WTC11 (cell line): ENCODE measurements at regions of chr10 and their contacts with region 1.

Region 1: DNA sequence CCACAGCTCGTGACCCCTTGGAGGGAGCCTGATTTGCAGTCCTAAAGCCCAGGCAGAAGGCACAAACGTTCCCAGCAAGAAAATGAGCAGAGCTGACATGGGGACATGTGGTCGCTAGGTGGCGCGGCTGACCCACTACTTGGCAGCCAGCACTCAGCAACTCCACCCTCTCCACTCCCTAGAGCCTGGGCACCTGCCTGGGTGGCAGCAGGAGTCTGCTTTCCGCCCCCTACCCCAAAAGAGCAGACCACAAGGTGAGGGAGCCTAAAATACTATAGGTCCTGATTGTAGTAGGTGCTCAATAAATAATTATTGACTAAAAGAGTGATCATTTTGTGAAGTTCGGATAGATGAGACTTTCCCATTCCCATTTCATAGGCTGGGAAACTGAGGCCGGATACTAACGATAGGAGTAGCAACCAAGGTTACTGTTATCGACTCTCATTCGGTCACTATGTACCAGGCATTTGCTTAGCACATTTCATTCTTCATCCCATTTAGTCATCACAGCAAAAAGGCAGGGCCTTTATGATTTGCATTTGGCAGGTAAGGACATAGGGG is 57.4 kb downstream of the NEUROG3 start:
- DNase-seq: peak; percentile 88
- ATAC-seq: peak; percentile 89
- H3K4me3 Mint-ChIP-seq: no peak overlapping the region
- H3K27ac Mint-ChIP-seq: no peak overlapping the region
- H3K4me1 Mint-ChIP-seq: peaks cover 19% of the 10 kb centered on the region
- H3K27me3 Mint-ChIP-seq: no peaks in the 10 kb centered on the region
- CTCF ChIP-seq: peak; percentile 94

Region 2: GRCh38 chr10:69408318-69409175 is 107.2 kb before region 1 on chr10:
- CTCF ChIA-PET with region 1: interaction called, 27 read pairs
- POLR2A ChIA-PET with region 1: no interaction called
- DNase-seq: peak; percentile 94
- ATAC-seq: peak; percentile 71
- H3K4me3 Mint-ChIP-seq: peak overlapping the region; percentile 49
- H3K27ac Mint-ChIP-seq: peak overlapping the region; percentile 72; the same call in 1 of the 2 replicates
- H3K4me1 Mint-ChIP-seq: peaks cover 42% of the 10 kb centered on the region
- H3K27me3 Mint-ChIP-seq: peaks cover 7% of the 10 kb centered on the region
- CTCF ChIP-seq: peak; percentile 62

Region 3: DNA sequence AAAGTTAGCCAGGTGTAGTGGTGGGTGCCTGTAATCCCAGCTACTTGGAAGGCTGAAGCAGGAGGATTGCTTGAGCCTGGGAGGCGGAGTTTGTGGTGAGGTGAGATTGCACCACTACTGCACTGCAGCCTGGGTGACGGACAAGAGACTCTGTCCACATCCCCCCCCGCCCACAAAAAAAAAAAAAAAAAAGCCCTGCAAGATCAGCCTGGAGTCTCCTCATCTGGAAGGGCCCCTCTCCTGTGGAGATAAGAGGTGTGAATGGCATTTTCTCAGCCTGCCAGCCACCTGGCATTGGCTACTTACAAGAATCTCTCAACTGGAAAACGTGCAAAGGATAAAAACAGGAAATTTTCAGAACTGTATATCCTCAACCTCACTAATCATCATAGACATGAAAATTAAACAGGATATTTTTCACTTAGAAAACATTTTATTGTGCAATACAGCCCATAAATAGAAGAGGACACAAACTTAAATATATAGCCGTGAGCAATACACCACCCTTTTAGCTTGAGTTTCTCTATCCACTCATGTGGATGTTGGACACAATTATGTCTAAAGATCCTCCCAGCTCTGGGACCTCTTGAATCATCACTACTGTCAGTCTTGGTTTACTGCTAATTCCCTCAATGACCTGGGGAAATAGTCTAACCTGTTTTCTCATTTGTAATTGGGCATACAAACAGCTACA is 75.8 kb before region 1 on chr10:
- CTCF ChIA-PET with region 1: no interaction called
- POLR2A ChIA-PET with region 1: no interaction called
- DNase-seq: no peak
- ATAC-seq: peak; percentile 68
- H3K4me3 Mint-ChIP-seq: no peak overlapping the region
- H3K27ac Mint-ChIP-seq: no peak overlapping the region
- H3K4me1 Mint-ChIP-seq: peaks cover 6% of the 10 kb centered on the region; the same call in 1 of the 2 replicates
- H3K27me3 Mint-ChIP-seq: peaks cover 9% of the 10 kb centered on the region
- CTCF ChIP-seq: no peak

Region 4: GRCh38 chr10:69527961-69528360 is 12.2 kb after region 1 on chr10:
- CTCF ChIA-PET with region 1: interaction called, 20 read pairs
- POLR2A ChIA-PET with region 1: no interaction called
- DNase-seq: no peak
- ATAC-seq: no peak
- H3K4me3 Mint-ChIP-seq: no peak overlapping the region
- H3K27ac Mint-ChIP-seq: no peak overlapping the region
- H3K4me1 Mint-ChIP-seq: peaks cover 1% of the 10 kb centered on the region; the same call in 1 of the 2 replicates
- H3K27me3 Mint-ChIP-seq: peaks cover 8% of the 10 kb centered on the region
- CTCF ChIP-seq: no peak

Region 5: DNA sequence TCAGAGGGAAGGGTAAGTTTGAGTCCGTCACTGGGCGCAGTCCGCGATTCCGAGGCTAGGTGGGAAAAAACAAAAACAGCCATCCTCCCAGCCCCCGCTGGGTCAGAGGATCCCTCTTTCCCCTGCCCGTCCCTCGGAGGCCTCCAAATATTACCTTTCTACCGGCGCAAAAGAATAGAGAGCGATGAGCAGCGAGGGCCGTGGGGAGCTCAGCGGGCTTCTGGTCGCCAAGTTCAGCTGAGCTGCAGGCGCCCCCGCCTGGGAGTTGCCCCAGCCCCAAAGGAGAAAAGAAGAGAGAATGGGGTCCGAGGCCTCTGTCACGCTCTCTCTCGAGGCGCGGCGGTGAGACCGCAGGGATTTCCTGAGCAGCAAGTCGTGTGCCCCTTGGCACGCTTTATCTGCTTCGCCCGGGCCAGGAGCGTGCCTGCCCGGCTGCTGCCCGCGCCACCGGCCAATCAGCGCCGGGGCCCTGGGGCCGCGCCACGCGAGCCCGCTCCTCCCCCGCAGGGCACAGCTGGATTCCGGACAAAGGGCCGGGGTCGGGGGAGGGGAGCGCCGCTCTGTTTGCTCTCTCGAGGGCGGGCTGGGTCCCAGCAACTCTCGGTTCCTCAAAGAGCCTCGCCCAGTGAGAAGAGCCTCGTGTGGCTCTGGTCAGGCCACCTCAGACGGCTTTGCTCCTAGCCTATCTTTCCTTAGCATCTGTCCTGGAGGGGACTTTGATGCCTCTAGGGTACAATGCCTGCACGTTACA is 57.5 kb after region 1 on chr10 and contains the start of gene NEUROG3:
- CTCF ChIA-PET with region 1: interaction called, 53 read pairs
- POLR2A ChIA-PET with region 1: interaction called, 3 read pairs
- DNase-seq: peak; percentile 56
- ATAC-seq: peak; percentile 2; the same call in 1 of the 2 replicates
- H3K4me3 Mint-ChIP-seq: peak within 1 kb of the TSS; percentile 88
- H3K27ac Mint-ChIP-seq: peak within 1 kb of the TSS; percentile 74; the same call in 1 of the 2 replicates
- H3K4me1 Mint-ChIP-seq: peaks cover 73% of the 10 kb centered on the region
- H3K27me3 Mint-ChIP-seq: peaks cover 100% of the 10 kb centered on the region
- CTCF ChIP-seq: no peak
- total RNA-seq, gene NEUROG3: 1.9 to 2.4 TPM (median 2.0 TPM) in 3 replicates

Region 6: DNA sequence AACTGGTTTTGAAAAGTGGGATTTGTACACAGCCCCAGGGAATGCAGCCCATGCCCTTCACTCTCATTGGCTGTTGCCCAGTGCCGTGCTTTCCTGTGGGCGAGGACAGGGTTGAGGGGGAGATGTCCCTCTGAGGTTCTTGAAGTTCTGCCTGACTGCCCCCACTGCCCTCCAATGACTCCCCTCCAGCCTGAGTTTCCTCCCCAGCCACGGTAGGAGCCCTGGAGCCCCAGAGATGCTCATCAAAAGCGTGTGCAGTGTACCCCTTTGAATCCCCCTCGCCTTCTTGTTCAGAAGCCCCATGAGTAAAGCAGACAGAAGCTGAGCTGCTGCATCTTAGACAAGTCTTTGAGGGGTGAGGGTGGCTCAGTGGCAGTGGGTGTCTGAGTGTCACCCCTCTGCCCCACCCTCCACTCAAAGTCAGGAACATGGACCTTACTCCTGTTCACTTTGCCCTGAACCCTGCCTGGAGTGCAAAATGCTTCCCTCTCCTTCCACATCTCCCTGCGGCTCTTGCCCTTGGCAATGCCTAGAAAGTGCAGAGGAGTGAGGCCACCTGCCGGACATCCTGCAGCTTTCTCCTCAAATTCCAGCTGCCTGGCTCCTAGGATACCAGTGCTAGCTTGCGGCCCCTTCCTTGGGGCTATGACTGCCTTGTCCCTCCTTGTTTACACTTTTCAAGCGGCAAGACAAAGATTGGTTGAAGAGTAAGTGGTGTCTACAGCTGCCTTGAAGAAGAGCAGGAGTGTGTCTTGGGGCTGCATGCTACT is 134.2 kb after region 1 on chr10:
- CTCF ChIA-PET with region 1: interaction called, 511 read pairs
- POLR2A ChIA-PET with region 1: interaction called, 3 read pairs
- DNase-seq: peak; percentile 43
- ATAC-seq: peak; percentile 66
- H3K4me3 Mint-ChIP-seq: no peak overlapping the region
- H3K27ac Mint-ChIP-seq: no peak overlapping the region
- H3K4me1 Mint-ChIP-seq: peaks cover 50% of the 10 kb centered on the region
- H3K27me3 Mint-ChIP-seq: no peaks in the 10 kb centered on the region
- CTCF ChIP-seq: no peak

Region 7: DNA sequence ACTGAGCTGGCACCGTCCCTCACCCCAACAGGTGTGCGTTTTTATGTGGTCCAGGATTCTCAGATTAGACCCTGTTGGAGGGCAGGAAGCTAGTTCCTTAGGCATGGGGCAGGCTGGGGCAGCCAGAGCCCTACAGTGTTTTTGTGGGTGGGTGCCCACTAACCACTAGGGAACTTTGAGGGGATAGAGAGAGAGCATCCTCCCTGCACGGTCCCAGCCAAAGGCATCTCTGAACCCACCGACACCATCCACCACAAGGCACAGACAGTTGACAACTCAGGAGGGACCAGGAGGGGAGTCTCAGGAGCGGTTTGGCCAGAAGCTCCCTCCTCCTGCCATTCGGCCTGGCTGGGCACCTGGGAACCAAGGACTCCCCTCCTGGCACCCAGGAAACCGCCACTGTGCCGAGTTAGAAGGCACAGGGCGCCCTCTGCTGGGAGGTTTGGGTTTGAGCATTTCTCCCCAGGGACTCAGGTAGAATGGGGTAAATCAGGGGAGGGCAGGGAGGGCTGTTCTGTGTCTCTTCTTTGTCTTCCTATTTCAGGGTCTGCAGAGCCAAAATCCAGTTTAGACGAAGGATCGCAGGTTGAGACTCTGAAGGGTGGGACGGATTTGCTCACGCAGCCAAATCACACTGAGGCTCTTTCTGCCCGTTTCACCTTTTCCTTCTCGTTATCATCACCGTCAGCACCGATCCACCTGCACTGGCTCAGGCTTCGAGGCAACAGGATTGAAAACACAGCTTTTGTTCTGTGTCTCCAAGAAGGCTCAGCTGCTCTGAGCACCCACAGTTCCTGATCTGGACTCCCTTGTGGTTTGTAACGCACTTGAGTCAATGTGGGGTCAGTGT is 201.2 kb after region 1 on chr10:
- CTCF ChIA-PET with region 1: interaction called, 28 read pairs
- POLR2A ChIA-PET with region 1: no interaction called
- DNase-seq: peak; percentile 84
- ATAC-seq: peak; percentile 88
- H3K4me3 Mint-ChIP-seq: no peak overlapping the region
- H3K27ac Mint-ChIP-seq: 0 out of 2 replicates have a peak overlapping the region, but pooled peaks have one; percentile 8
- H3K4me1 Mint-ChIP-seq: peaks cover 7% of the 10 kb centered on the region
- H3K27me3 Mint-ChIP-seq: peaks cover 8% of the 10 kb centered on the region
- CTCF ChIP-seq: peak; percentile 80